ENCODE measurements at regions of chr18 and their contacts with region 1.

Region 1: DNA sequence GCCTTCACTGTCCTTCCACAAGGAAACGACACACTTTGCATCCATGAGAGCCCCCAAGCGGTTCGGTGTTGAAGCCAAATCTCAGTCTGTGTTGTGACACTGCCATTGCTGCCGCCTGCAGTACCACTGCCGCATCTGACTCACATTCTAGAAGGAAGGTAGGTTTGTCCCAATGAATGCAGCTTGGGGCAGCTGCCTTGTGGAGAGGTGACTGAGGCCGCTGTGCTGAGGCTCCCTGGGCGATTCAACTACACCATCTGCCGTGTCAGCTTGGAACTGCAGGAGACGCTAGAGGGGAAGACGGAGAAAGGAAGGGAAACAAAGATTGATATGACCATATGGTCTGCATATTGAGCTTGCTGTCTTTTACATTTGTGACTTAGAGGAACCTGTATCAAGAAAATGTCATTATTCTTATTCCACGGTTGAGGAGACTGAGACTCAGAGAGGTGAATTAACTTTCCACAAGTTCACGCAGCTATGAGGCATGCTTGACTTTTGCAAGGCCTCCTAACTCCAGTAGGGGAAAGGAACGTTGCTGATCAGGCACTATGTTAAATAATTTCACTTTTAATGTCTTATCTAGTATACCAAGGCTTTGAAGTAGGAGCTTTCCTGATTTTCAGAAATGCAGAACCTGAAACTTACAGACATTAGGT is 43.5 kb upstream of the LMAN1 start:
- H3K4me3 ChIP-seq: no peak overlapping the region
- H3K27ac ChIP-seq: no peak overlapping the region
- H3K4me1 ChIP-seq: no peaks in the 10 kb centered on the region
- CTCF ChIP-seq: peak; percentile 100

Region 2: DNA sequence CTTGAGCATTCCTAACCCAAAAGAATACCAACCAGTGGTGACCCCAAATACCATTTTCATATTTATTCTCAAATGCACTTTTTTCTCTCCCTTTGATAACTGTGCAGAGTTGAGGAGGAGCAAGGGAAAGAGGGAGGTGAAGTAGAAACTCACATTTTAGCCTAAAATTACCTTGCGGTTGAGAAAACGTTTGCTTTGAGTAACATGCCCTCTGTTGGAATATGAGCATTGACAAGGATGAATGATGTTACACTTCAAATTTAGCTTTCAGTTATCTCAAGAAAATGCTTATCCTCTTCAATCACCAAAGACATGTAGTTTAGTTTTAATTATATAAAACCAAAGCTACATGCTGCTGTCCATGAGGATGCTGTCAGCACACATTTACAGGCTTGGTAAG is 180.2 kb before region 1 on chr18:
- CTCF ChIA-PET with region 1: interaction called, 18 read pairs
- POLR2A ChIA-PET with region 1: no interaction called
- H3K4me3 ChIP-seq: no peak overlapping the region
- H3K27ac ChIP-seq: no peak overlapping the region
- H3K4me1 ChIP-seq: peaks cover 2% of the 10 kb centered on the region; the same call in 1 of the 2 replicates
- CTCF ChIP-seq: no peak

Region 3: GRCh38 chr18:59249205-59249774 is 153.3 kb before region 1 on chr18:
- CTCF ChIA-PET with region 1: interaction called, 218 read pairs
- POLR2A ChIA-PET with region 1: interaction called, 7 read pairs
- H3K4me3 ChIP-seq: no peak overlapping the region
- H3K27ac ChIP-seq: no peak overlapping the region
- H3K4me1 ChIP-seq: no peaks in the 10 kb centered on the region; the same call in 1 of the 2 replicates
- CTCF ChIP-seq: peak; percentile 48; the same call in 1 of the 2 replicates

Region 4: DNA sequence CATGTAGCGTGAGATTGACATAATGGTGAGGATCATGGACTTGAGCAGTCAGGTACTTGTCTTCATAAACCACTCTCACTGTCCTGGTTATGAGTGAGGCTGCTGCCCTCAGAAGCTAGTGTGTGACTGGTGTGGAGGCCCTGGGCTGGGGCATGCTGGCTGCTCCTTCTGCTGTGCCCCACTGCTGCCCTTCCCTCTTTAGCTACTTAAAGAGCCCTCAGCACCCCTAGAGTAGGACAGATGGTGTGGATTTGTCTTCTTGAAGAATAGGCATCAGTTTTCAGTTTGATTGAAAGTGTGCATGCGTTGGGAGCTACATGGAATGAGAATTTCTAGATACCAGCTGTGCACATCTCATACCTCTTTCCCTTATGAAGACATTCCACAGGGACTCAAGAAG is 99.6 kb before region 1 on chr18:
- CTCF ChIA-PET with region 1: interaction called, 163 read pairs
- POLR2A ChIA-PET with region 1: interaction called, 6 read pairs
- H3K4me3 ChIP-seq: no peak overlapping the region
- H3K27ac ChIP-seq: no peak overlapping the region
- H3K4me1 ChIP-seq: no peaks in the 10 kb centered on the region
- CTCF ChIP-seq: no peak

Region 5: GRCh38 chr18:59332986-59333385 is 69.6 kb before region 1 on chr18:
- CTCF ChIA-PET with region 1: interaction called, 11 read pairs
- POLR2A ChIA-PET with region 1: no interaction called
- H3K4me3 ChIP-seq: no peak overlapping the region
- H3K27ac ChIP-seq: no peak overlapping the region
- H3K4me1 ChIP-seq: no peaks in the 10 kb centered on the region
- CTCF ChIP-seq: no peak

Region 6: DNA sequence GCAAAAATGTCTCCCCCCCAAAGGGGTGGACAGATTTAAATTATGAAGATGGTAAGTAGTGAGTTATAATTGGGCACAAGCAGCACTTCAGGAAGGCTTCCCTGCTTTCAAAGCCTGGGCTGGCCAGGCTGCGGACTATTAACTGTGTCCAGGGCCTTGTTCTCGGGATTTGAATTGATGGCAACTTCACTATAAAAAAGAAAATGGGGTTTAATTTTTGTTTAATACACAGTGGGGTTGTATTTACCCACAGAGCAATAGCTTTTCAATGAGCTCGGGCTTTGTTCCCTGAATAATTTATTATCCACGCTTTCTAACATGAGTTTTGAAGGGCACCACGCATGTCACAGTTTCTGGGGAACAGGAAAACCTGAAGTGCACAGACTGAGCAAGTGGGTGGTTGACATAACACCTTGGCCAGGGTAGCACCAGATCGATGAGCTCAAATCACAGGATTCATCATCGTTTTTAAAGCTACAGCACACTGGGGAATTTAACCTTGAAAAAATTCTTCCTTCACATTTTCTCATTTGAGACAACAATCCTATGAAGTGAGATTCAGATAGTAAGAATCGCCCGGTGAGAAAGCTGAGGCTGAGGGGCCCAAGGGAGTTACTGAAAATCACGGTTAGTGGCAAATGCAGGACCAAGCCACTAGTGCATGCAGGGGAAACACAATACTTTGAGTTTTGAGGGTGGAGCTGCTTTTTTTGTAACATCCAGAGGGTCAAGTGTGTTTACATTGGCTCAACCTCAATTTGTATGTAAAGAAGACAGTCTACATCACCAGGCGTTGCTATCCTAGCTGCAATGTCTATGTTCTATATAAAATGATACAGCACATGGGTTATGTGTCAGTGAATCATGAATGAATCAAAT is 14.6 kb before region 1 on chr18:
- CTCF ChIA-PET with region 1: interaction called, 34 read pairs
- POLR2A ChIA-PET with region 1: no interaction called
- H3K4me3 ChIP-seq: no peak overlapping the region
- H3K27ac ChIP-seq: no peak overlapping the region; the same call in 1 of the 2 replicates
- H3K4me1 ChIP-seq: peaks cover 13% of the 10 kb centered on the region
- CTCF ChIP-seq: no peak

Region 7: DNA sequence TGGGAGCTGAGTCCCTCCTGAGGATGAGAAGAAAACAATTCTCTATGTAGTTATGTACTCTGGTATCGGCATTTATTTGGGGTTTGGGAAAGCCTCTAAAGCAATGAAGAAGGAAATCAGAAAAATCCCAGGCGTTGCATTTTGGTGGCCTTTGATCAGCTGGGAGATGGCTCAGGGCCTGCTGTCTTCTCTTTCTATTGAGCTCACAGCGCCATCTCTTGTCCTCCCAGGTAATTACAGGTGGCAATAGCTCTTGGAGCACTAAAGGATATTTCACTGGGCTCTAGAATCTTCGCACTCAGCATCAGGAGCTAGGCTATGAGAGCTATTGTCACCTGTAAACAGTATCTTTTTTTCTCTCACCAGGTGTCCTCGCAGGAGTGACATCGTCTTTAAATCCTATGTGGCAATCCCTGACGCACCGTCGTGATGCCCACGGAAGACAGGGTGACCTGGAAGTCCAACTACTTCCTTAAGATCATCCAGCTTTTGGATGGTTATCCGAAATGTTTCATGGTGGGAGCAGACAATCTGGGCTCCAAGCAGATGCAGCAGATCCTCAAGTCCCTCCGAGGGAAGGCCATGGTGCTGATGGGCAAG is 421.1 kb after region 1 on chr18:
- CTCF ChIA-PET with region 1: interaction called, 52 read pairs
- POLR2A ChIA-PET with region 1: interaction called, 5 read pairs
- H3K4me3 ChIP-seq: no peak overlapping the region
- H3K27ac ChIP-seq: no peak overlapping the region
- H3K4me1 ChIP-seq: no peaks in the 10 kb centered on the region
- CTCF ChIP-seq: peak; percentile 71

Measured in HEK293 (cell line).